ENCODE measurements at regions of chr5 and their contacts with region 1.

Region 1: DNA sequence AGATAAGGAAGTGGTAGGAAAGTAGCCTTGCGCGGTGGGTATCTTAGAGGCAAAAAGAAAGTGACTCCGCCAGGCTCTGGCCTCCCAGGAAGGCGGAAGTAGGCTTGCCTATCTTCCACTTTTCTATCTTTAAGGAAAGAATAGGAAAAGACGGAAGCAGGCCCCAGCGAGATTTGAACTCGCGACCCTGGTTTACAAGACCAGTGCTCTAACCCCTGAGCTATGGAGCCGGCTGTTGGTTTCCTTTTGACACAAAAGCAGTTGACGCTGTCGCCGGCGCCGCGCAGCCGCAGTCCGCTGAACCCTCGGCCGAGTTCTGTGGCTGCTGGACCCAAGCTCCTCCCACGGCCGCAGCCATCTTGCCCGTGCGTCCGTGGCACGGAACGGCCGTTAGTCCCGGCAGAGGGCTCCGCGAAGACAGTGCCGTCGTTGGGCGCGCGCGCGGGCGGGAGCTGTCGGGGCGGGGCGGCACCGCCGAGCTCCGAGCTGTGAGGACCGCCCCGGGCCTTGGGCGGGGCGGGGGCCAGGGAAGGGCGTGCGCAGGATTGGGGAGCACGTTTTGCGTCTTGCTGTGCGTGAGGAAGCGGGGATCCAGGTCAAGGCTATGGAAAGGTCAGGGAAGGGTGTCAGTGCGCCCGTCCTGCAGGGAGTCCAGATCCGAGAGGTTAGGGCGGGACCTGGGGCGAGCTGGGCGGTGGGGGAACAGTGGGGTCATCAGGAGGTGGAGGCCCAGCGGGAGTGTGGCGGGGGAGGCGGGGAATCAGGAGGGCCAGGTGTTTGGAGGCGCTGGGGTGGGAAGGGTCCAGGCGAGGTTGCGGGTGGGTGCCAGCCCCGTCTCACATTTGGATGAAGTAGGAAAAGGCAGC is 13.2 kb downstream of the TRIM7 start:
- DNase-seq: peak; percentile 97
- H3K4me3 ChIP-seq: peak overlapping the region; percentile 73 to 91 (median 86)
- H3K27ac ChIP-seq: peak overlapping the region; percentile 23
- H3K4me1 ChIP-seq: peaks cover 18% of the 10 kb centered on the region
- H3K27me3 ChIP-seq: no peaks in the 10 kb centered on the region
- CTCF ChIP-seq: no peak
- POLR2A ChIP-seq: peak; percentile 93

Region 2: DNA sequence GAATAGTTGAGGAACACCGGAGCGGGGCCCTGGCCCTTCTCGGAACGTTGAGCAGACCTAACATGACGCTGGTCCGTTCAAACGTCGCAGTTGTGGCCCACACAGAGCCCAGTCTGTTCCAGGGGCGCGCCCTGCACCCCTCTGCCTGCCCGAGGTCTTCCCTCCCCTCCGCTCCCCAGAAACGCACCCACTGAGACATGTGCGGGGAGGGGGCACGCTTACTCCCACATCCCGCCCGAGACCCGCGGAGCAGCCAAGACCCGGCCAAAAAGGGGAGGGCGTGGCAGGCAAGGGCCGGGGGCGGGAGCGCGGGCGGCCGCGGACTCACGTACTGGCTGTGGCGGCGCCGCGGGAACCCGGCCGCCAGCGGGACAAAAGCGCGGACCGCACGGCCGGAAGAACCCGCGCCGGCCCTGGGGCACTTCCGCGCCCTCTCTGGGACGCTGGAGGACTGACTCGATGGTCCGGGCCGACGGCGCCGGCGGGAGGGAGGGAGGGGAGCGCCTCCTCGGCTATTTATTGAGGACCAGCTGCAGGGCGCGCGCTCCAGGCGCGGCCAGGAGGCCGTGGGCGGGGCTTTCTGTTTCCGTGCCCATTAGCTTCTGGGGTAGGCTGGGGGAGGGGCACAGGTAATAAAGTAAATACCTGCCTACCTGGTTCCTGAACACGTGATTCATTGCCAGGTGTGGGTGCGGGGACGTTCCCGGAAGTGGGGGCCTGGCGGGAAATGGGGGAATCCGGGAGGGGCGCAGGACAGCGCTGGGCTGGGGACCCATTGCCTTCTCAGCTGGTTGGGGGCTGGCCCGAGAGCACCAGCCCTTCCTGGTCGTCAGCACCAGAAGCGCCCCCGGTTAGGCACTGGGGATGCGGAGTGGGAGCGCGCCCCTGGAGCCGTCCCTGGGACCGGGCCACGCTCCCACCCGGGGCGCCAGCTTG is 330.6 kb before region 1 on chr5 and contains the start of gene ZFP62:
- CTCF ChIA-PET with region 1: no interaction called
- POLR2A ChIA-PET with region 1: no interaction called
- dilution Hi-C with region 1: no loop called
- intact Hi-C with region 1: loop called (anchors 2 kb)
- DNase-seq: peak; percentile 90
- H3K4me3 ChIP-seq: peak within 1 kb of the TSS; percentile 44 to 79 (median 67)
- H3K27ac ChIP-seq: peak within 1 kb of the TSS; percentile 55
- H3K4me1 ChIP-seq: peaks cover 10% of the 10 kb centered on the region
- H3K27me3 ChIP-seq: no peaks in the 10 kb centered on the region
- CTCF ChIP-seq: no peak
- POLR2A ChIP-seq: peak; percentile 59
- total RNA-seq, gene ZFP62: 14.6 and 19.7 TPM in 2 replicates

Region 3: GRCh38 chr5:181028032-181028819 is 163.5 kb before region 1 on chr5:
- CTCF ChIA-PET with region 1: no interaction called
- POLR2A ChIA-PET with region 1: no interaction called
- dilution Hi-C with region 1: no loop called
- intact Hi-C with region 1: no loop called
- DNase-seq: no peak
- H3K4me3 ChIP-seq: no peak overlapping the region
- H3K27ac ChIP-seq: no peak overlapping the region
- H3K4me1 ChIP-seq: no peaks in the 10 kb centered on the region
- H3K27me3 ChIP-seq: no peaks in the 10 kb centered on the region
- CTCF ChIP-seq: no peak
- POLR2A ChIP-seq: no peak

Region 4: GRCh38 chr5:181063514-181063913 is 128.2 kb before region 1 on chr5:
- CTCF ChIA-PET with region 1: no interaction called
- POLR2A ChIA-PET with region 1: no interaction called
- dilution Hi-C with region 1: no loop called
- intact Hi-C with region 1: no loop called
- DNase-seq: no peak
- H3K4me3 ChIP-seq: no peak overlapping the region
- H3K27ac ChIP-seq: no peak overlapping the region
- H3K4me1 ChIP-seq: no peaks in the 10 kb centered on the region
- H3K27me3 ChIP-seq: peaks cover 12 to 22% of the 10 kb centered on the region in 2 experiments
- CTCF ChIP-seq: no peak
- POLR2A ChIP-seq: no peak

Region 5: GRCh38 chr5:181207214-181208107 is 15.7 kb after region 1 on chr5:
- CTCF ChIA-PET with region 1: interaction called, 95 read pairs
- POLR2A ChIA-PET with region 1: interaction called, 11 read pairs
- dilution Hi-C with region 1: no loop called
- intact Hi-C with region 1: loop called (anchors 1 kb)
- DNase-seq: peak; percentile 93
- H3K4me3 ChIP-seq: peak overlapping the region; percentile 37 to 62 (median 40)
- H3K27ac ChIP-seq: peak overlapping the region; percentile 60
- H3K4me1 ChIP-seq: peaks cover 12% of the 10 kb centered on the region
- H3K27me3 ChIP-seq: peaks cover 0 to 2% of the 10 kb centered on the region in 2 experiments
- CTCF ChIP-seq: no peak
- POLR2A ChIP-seq: peak; percentile 52

Region 6: DNA sequence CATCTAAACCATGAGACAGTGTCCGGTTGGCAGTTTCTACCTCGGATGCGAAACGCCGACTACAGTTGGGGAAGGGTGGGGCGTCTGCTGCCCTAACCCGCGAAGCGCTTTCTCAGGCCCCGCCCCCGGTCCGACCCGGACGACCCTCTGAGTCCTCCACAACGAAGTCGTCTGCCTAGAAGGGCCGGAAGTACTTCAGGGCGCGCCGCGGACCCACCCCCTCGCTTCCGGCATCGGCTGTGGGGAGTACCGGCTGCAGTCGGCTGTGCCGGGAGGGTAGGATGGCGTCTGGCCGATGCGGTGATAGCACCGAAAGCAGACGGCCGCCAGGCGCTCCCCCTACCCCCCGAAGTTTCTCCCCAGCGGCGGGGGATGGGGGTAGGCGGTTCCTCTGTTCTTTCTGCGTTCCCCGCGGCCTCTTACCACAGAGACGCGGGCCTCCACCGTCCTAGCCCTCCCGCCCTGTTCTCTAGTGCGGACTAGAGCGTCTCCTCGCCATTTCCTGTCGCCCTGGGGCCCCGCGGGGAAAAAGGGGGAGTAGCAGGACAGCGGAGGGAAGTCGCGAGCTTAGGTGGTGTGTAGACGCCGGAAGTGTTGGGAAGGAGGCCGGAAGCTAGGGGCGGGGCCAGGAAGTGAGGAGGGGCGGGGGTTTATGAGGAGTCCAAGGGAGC is 31.4 kb after region 1 on chr5 and contains the start of gene TRIM41:
- CTCF ChIA-PET with region 1: interaction called, 3 read pairs
- POLR2A ChIA-PET with region 1: interaction called, 3 read pairs
- dilution Hi-C with region 1: no loop called
- intact Hi-C with region 1: loop called (anchors 1 kb)
- DNase-seq: peak; percentile 98
- H3K4me3 ChIP-seq: peak within 1 kb of the TSS; percentile 21 to 76 (median 64)
- H3K27ac ChIP-seq: peak within 1 kb of the TSS; percentile 88
- H3K4me1 ChIP-seq: peaks cover 10% of the 10 kb centered on the region
- H3K27me3 ChIP-seq: no peaks in the 10 kb centered on the region
- CTCF ChIP-seq: peak; percentile 4 to 26
- POLR2A ChIP-seq: no peak
- total RNA-seq, gene TRIM41: 17.3 and 19.9 TPM in 2 replicates

Region 7: GRCh38 chr5:181260387-181261319 is 68.9 kb after region 1 on chr5 and contains the start of gene TRIM52:
- CTCF ChIA-PET with region 1: interaction called, 6 read pairs
- POLR2A ChIA-PET with region 1: no interaction called
- dilution Hi-C with region 1: no loop called
- intact Hi-C with region 1: loop called (anchors 1 kb)
- DNase-seq: peak; percentile 92
- H3K4me3 ChIP-seq: peak within 1 kb of the TSS; percentile 23 to 83 (median 59)
- H3K27ac ChIP-seq: peak within 1 kb of the TSS; percentile 95
- H3K4me1 ChIP-seq: peaks cover 23% of the 10 kb centered on the region
- H3K27me3 ChIP-seq: no peaks in the 10 kb centered on the region
- CTCF ChIP-seq: no peak
- POLR2A ChIP-seq: peak; percentile 80
- total RNA-seq, gene TRIM52: 9.6 and 10.1 TPM in 2 replicates